Ascending aorta (tissue), 2 donors: ENCODE measurements at regions of chr17 and their contacts with region 1.

Region 1: GRCh38 chr17:39927101-39927928 is at the starts of genes LRRC3C and ORMDL3:
- DNase-seq: peak; percentile 67 to 95
- H3K4me3 ChIP-seq: peak within 1 kb of the TSS; percentile 95 to 100
- H3K27ac ChIP-seq: peak within 1 kb of the TSS; percentile 98 to 99
- H3K4me1 ChIP-seq: peaks cover 14 to 32% of the 10 kb centered on the region in 2 donors
- H3K27me3 ChIP-seq: no peaks in the 10 kb centered on the region
- CTCF ChIP-seq: no peak
- total RNA-seq, gene LRRC3C: not detected
- total RNA-seq, gene ORMDL3: 32.2 TPM

Region 2: GRCh38 chr17:39153599-39154051 is 773.7 kb before region 1 on chr17:
- intact Hi-C with region 1: loop called (anchors 5 kb)
- DNase-seq: peak; percentile 90 to 98
- H3K4me3 ChIP-seq: peak overlapping the region; percentile 85 to 94
- H3K27ac ChIP-seq: peak overlapping the region; percentile 84 to 94
- H3K4me1 ChIP-seq: peaks cover 12 to 15% of the 10 kb centered on the region in 2 donors
- H3K27me3 ChIP-seq: no peaks in the 10 kb centered on the region
- CTCF ChIP-seq: peak in 2 of 3 experiments; percentile 16 to 33

Region 3: DNA sequence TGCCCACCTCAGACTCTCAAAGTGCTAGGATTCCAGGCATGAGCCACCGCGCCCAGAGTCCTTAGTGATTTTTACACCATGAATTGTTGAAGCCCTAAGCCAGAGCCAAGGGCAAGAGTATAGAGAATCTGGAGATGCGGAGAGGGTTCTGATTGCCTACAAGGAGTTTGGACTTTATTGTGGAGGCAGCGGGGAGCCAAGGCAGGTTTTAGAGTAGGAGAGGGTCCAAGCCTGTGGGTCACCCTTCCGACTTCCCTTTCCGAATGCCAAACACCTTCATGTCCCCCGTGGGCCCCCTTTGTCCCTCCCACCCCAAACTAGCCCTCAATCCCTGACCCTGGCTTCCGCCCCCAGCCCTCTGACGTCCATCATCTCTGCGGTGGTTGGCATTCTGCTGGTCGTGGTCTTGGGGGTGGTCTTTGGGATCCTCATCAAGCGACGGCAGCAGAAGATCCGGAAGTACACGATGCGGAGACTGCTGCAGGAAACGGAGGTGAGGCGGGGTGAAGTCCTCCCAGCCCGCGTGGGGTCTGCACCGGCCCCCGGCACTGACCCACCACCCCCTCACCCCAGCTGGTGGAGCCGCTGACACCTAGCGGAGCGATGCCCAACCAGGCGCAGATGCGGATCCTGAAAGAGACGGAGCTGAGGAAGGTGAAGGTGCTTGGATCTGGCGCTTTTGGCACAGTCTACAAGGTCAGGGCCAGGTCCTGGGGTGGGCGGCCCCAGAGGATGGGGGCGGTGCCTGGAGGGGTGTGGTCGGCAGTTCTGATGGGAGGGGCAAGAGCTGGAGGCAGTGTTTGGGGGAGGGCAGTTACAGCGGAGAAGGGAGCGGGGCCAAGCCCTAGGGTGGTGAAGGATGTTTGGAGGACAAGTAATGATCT is 204.1 kb before region 1 on chr17:
- intact Hi-C with region 1: loop called (anchors 10 kb)
- DNase-seq: no peak
- H3K4me3 ChIP-seq: no peak overlapping the region
- H3K27ac ChIP-seq: no peak overlapping the region
- H3K4me1 ChIP-seq: no peaks in the 10 kb centered on the region
- H3K27me3 ChIP-seq: no peaks in the 10 kb centered on the region
- CTCF ChIP-seq: no peak

Region 4: GRCh38 chr17:39889200-39889599 is 38.1 kb before region 1 on chr17:
- intact Hi-C with region 1: no loop called
- DNase-seq: no peak
- H3K4me3 ChIP-seq: no peak overlapping the region
- H3K27ac ChIP-seq: no peak overlapping the region
- H3K4me1 ChIP-seq: no peaks in the 10 kb centered on the region
- H3K27me3 ChIP-seq: no peaks in the 10 kb centered on the region
- CTCF ChIP-seq: no peak

Region 5: DNA sequence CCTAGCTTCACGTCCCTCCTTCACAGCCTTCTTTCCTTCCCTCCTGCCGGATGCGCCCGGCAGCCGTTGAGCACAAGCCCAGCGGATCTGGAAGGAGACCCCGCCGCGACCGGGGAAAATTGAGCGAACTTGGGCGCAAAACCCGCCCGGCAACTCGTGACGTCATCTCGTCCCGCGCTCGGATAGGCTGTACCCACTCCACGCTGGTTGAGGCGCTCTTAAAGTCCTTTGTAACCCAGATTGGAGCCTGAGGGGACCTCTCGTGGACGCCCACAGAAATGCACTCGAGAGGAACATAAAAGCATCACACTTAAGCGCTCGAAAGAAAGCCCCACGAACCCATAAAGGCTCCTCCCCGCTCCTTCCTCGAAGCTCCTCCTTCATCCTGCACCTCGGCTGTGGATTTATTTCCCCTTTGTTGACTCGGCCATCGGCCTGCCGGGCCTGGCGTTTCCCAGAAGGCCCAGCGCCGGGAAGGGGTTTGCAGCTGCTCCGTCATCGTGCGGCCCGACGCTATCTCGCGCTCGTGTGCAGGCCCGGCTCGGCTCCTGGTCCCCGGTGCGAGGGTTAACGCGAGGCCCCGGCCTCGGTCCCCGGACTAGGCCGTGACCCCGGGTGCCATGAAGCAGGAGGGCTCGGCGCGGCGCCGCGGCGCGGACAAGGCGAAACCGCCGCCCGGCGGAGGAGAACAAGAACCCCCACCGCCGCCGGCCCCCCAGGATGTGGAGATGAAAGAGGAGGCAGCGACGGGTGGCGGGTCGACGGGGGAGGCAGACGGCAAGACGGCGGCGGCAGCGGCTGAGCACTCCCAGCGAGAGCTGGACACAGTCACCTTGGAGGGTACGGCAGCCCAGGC is 53.3 kb after region 1 on chr17 and contains the start of gene PSMD3:
- intact Hi-C with region 1: loop called (anchors 1 kb)
- DNase-seq: peak; percentile 98 to 100
- H3K4me3 ChIP-seq: peak within 1 kb of the TSS; percentile 88 to 99
- H3K27ac ChIP-seq: peak within 1 kb of the TSS; percentile 85 to 93
- H3K4me1 ChIP-seq: peaks cover 9 to 15% of the 10 kb centered on the region in 2 donors
- H3K27me3 ChIP-seq: no peaks in the 10 kb centered on the region
- CTCF ChIP-seq: peak; percentile 75 to 94 (median 81)
- total RNA-seq, gene PSMD3: 93.1 TPM